ENCODE measurements at regions of chr4 and their contacts with region 1.

Region 1: GRCh38 chr4:134345133-134345648 is 143.6 kb upstream of the PABPC4L start:
- DNase-seq: no peak
- H3K4me3 ChIP-seq: no peak overlapping the region
- CTCF ChIP-seq: no peak
- POLR2A ChIP-seq: no peak

Region 2: GRCh38 chr4:134382478-134383227 is 37.5 kb after region 1 on chr4:
- intact Hi-C with region 1: loop called (anchors 1 kb)
- DNase-seq: no peak
- H3K4me3 ChIP-seq: no peak overlapping the region
- CTCF ChIP-seq: no peak
- POLR2A ChIP-seq: no peak

Region 3: GRCh38 chr4:134408897-134409296 is 63.7 kb after region 1 on chr4:
- intact Hi-C with region 1: no loop called
- DNase-seq: no peak
- H3K4me3 ChIP-seq: no peak overlapping the region
- CTCF ChIP-seq: no peak
- POLR2A ChIP-seq: no peak

Measured in lower leg skin (tissue), 4 donors.